Breast epithelium (tissue), 4 donors: ENCODE measurements at regions of chr3 and their contacts with region 1.

Region 1: GRCh38 chr3:113264283-113265131 is 53.1 kb downstream of the BOC start:
- DNase-seq: no peak
- H3K4me3 ChIP-seq: no peak overlapping the region
- H3K27ac ChIP-seq: peak overlapping the region; percentile 79 to 93
- H3K4me1 ChIP-seq: peaks cover 0 to 4% of the 10 kb centered on the region in 2 donors
- H3K27me3 ChIP-seq: no peaks in the 10 kb centered on the region
- CTCF ChIP-seq: no peak
- POLR2A ChIP-seq: no peak

Region 2: DNA sequence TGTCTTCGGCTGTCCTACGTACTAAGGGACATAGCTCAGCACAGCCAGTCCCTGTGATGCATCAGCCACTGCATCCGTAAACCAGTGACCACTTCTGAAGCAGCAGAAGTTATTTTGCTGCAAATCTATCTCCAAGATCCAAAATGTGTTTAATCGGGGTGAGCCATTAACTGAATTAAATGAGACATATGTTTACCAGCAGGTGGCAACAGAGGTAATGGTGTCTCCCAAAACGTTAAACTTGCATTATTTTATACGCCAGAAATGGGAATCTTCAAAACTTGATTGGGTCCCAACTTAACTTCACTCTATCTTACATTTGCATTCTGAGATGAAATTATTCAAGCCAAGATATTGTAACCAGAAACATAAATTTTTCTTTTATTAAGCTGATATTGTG is 128.4 kb before region 1 on chr3:
- intact Hi-C with region 1: loop called (anchors 10 kb)
- DNase-seq: no peak
- H3K4me3 ChIP-seq: no peak overlapping the region
- H3K27ac ChIP-seq: no peak overlapping the region
- H3K4me1 ChIP-seq: no peaks in the 10 kb centered on the region
- H3K27me3 ChIP-seq: no peaks in the 10 kb centered on the region
- CTCF ChIP-seq: peak; percentile 57 to 63 (median 62)
- POLR2A ChIP-seq: no peak

Region 3: GRCh38 chr3:113783463-113783862 is 519.0 kb after region 1 on chr3:
- intact Hi-C with region 1: no loop called
- DNase-seq: no peak
- H3K4me3 ChIP-seq: no peak overlapping the region
- H3K27ac ChIP-seq: no peak overlapping the region
- H3K4me1 ChIP-seq: no peaks in the 10 kb centered on the region
- H3K27me3 ChIP-seq: no peaks in the 10 kb centered on the region
- CTCF ChIP-seq: no peak
- POLR2A ChIP-seq: no peak